Vagina (tissue), 2 donors: ENCODE measurements at regions of chr12 and their contacts with region 1.

Region 1: GRCh38 chr12:45728630-45729232 is 775 bp upstream of the ARID2 start:
- DNase-seq: peak in 1 of 2 donors; percentile 97
- H3K4me3 ChIP-seq: peak overlapping the region; percentile 67 to 86
- H3K27ac ChIP-seq: peak overlapping the region; percentile 100
- H3K4me1 ChIP-seq: peaks cover 43% of the 10 kb centered on the region
- H3K27me3 ChIP-seq: no peaks in the 10 kb centered on the region
- CTCF ChIP-seq: peak; percentile 81 to 89 (median 83)
- POLR2A ChIP-seq: peak; percentile 8 to 71

Region 2: GRCh38 chr12:45990468-45991283 is 261.9 kb after region 1 on chr12 and contains the start of gene SCAF11:
- intact Hi-C with region 1: loop called (anchors 1 kb)
- DNase-seq: peak; percentile 100
- H3K4me3 ChIP-seq: peak within 1 kb of the TSS; percentile 90 to 98
- H3K27ac ChIP-seq: peak within 1 kb of the TSS; percentile 99
- H3K4me1 ChIP-seq: peaks cover 37% of the 10 kb centered on the region
- H3K27me3 ChIP-seq: no peaks in the 10 kb centered on the region
- CTCF ChIP-seq: peak; percentile 75 to 99 (median 98)
- POLR2A ChIP-seq: peak in 1 of 2 donors; percentile 83
- total RNA-seq, gene SCAF11: 104 TPM